ENCODE measurements at regions of chr1 and their contacts with region 1.

Region 1: DNA sequence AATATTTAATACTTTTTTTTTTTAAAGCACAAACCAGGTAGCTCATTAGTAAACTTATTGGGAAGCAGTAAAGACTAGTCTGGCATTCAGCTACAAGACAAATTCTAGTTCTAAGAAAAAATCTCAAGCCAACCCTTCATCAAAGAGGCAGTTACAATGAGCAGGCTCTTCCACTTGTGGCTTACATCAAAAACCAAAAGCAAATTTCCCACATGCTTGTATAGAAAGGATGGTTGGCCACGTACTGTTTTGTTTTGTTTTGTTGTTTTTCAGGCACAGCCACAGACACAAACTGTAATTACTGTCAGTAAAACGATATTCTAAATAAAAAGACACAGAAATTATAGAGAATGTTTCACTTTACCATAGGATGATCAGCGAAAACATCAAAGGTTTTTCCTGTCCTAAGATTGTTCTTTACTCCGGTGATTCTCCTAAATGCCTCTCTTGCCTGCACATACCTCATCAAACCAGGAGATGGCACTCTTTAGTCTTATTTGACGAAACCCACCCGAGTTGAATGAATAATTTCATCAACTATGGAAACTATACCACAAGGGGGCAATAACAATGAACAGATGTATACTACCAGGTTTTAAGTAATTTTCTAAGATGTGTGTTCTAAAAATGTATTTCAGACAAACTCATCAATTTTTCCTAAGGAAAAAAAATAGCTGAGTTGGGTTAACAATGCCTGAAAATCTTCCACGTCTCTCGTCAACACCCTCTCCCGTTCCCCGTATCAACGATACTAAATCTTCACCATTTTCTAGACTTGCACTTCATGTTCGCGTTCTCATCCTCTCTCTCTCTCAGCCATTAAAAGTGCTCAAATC is 26.9 kb downstream of the RPL5 start:
- DNase-seq: no peak
- H3K4me3 ChIP-seq: peak overlapping the region in 1 of 8 donors; percentile 30
- H3K27ac ChIP-seq: peak overlapping the region in 3 of 8 donors; percentile 1 to 31 (median 2)
- H3K4me1 ChIP-seq: peaks cover 0 to 22% (median 9%) of the 10 kb centered on the region in 6 donors
- H3K27me3 ChIP-seq: no peaks in the 10 kb centered on the region
- CTCF ChIP-seq: peak; percentile 89 to 99 (median 96)
- POLR2A ChIP-seq: no peak

Region 2: GRCh38 chr1:92951141-92951582 is 92.4 kb after region 1 on chr1:
- intact Hi-C with region 1: loop called (anchors 10 kb)
- DNase-seq: no peak
- H3K4me3 ChIP-seq: no peak overlapping the region
- H3K27ac ChIP-seq: peak overlapping the region in 6 of 8 donors; percentile 17 to 75 (median 58)
- H3K4me1 ChIP-seq: peaks cover 26 to 93% (median 68%) of the 10 kb centered on the region in 6 donors
- H3K27me3 ChIP-seq: no peaks in the 10 kb centered on the region
- CTCF ChIP-seq: peak in 2 of 11 experiments; percentile 8 to 20
- POLR2A ChIP-seq: no peak

Region 3: DNA sequence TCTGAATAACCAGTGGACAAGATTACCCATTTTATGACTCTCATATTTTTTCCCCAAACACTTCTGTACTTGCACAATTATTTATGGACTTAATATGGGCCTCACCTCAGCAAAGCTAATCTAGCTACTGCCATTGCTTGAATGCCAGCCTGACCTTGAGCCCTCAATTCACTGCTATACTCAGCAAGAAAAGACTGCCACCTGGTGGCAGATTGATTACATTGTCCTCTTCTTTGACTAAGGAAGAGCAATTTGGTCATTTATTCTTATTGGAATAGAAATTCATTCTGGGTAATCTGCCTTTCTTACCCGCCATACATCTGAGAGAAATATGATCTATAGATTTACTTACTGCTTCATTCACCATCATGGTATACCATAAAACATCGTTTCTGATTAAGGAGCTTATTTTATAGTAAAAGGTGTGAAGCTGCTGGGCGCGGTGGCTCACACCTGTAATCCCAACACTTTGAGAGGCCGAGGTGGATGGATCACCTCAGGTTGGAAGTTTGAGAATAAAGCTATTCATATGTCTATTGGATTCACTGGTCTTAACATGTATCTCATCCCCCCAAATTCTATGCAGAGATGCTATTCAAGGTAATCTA is 135.4 kb after region 1 on chr1:
- intact Hi-C with region 1: loop called (anchors 2 kb)
- DNase-seq: no peak
- H3K4me3 ChIP-seq: no peak overlapping the region
- H3K27ac ChIP-seq: no peak overlapping the region
- H3K4me1 ChIP-seq: peaks cover 0 to 39% (median 14%) of the 10 kb centered on the region in 6 donors
- H3K27me3 ChIP-seq: no peaks in the 10 kb centered on the region
- CTCF ChIP-seq: peak; percentile 61 to 94 (median 84)
- POLR2A ChIP-seq: no peak

Measured in spleen (tissue), 13 donors.